MCF 10A (cell line): ENCODE measurements at regions of chr16 and their contacts with region 1.

Region 1: DNA sequence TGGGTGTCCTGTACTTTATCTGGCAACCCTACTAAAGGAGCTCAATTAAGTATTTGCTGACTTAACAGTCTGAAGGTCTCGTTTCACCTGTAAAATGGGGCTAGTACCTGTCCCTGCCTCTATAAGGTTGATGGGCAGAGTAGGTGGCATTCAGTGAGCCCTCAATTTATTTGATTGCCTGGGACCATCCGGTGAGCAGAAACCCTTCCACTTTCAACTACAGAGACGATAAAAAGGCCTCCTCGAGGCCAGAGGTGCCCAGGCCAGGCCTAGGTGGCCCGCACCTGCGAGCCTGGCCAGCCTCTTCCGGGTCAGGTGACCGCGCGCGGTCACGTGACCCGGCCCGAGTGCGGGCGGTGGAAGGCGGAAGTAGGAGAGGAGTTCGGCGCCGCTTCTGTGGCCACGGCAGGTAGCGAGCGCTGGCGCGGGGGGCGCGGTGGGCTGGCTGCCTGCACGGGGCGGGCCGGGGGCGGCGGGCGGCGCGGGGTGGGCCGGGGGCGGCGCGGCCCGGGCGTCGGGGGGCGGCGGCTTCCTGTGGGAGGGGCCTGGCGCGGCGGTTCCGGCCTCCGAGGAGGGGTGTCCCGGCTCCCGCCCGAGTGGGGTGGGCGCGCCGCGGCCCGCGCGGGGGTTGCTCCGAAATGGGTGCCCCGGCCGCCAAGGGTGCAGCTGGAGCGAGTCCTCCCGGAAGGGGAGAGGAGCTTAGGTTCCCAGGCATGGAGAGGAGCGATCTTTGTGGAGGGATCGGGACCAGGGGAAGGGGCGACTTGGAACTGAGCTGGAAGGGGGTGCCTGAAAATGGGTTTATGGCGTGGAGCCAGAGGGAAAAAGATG is at the start of gene WWP2:
- DNase-seq: peak; percentile 80
- H3K4me3 Mint-ChIP-seq: peak within 1 kb of the TSS; percentile 75
- H3K27ac Mint-ChIP-seq: peak within 1 kb of the TSS; percentile 93
- H3K4me1 Mint-ChIP-seq: peaks cover 5% of the 10 kb centered on the region
- H3K27me3 Mint-ChIP-seq: no peaks in the 10 kb centered on the region
- CTCF ChIP-seq: no peak
- total RNA-seq, gene WWP2: 29.3 and 30.4 TPM in 2 replicates

Region 2: GRCh38 chr16:69741919-69742904 is 20.0 kb before region 1 on chr16:
- CTCF ChIA-PET with region 1: no interaction called
- POLR2A ChIA-PET with region 1: interaction called, 16 read pairs
- intact Hi-C with region 1: no loop called
- DNase-seq: peak; percentile 91
- H3K4me3 Mint-ChIP-seq: no peak overlapping the region
- H3K27ac Mint-ChIP-seq: no peak overlapping the region
- H3K4me1 Mint-ChIP-seq: peaks cover 11% of the 10 kb centered on the region
- H3K27me3 Mint-ChIP-seq: no peaks in the 10 kb centered on the region
- CTCF ChIP-seq: no peak

Region 3: GRCh38 chr16:69773260-69773947 is 11.2 kb after region 1 on chr16:
- CTCF ChIA-PET with region 1: interaction called, 5 read pairs
- POLR2A ChIA-PET with region 1: interaction called, 12 read pairs
- intact Hi-C with region 1: no loop called
- DNase-seq: no peak
- H3K4me3 Mint-ChIP-seq: no peak overlapping the region
- H3K27ac Mint-ChIP-seq: no peak overlapping the region
- H3K4me1 Mint-ChIP-seq: no peaks in the 10 kb centered on the region
- H3K27me3 Mint-ChIP-seq: no peaks in the 10 kb centered on the region
- CTCF ChIP-seq: no peak

Region 4: DNA sequence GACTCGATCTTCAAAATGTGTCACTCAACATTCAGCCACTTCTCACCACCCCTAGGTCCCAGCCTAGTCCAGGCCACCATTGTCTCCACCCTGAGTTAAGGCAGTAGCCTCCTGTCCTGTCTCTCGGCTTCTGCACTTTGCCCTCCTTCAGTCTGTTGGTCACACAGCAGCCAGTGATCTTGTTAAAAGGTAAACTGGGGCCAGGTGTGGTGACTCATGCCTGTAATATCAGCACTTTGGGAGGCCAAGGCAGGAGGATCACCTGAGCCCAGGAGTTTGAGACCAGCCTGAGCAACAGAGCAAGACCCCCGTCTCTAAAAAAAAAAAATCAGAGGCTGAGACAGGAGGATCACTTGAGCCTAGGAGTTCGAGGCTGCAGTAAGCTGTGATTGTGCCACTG is 25.7 kb after region 1 on chr16:
- CTCF ChIA-PET with region 1: no interaction called
- POLR2A ChIA-PET with region 1: interaction called, 11 read pairs
- intact Hi-C with region 1: no loop called
- DNase-seq: no peak
- H3K4me3 Mint-ChIP-seq: no peak overlapping the region
- H3K27ac Mint-ChIP-seq: no peak overlapping the region
- H3K4me1 Mint-ChIP-seq: no peaks in the 10 kb centered on the region
- H3K27me3 Mint-ChIP-seq: no peaks in the 10 kb centered on the region
- CTCF ChIP-seq: no peak